ENCODE measurements at regions of chr9 and their contacts with region 1.

Region 1: GRCh38 chr9:34500623-34501267 is 22.0 kb downstream of the ENHO start:
- DNase-seq: peak; percentile 91
- H3K4me3 Mint-ChIP-seq: no peak overlapping the region
- H3K27ac Mint-ChIP-seq: no peak overlapping the region
- H3K4me1 Mint-ChIP-seq: peaks cover 13% of the 10 kb centered on the region
- H3K27me3 Mint-ChIP-seq: peaks cover 7% of the 10 kb centered on the region

Region 2: GRCh38 chr9:34403554-34404380 is 97.0 kb before region 1 on chr9:
- CTCF ChIA-PET with region 1: interaction called, 77 read pairs
- intact Hi-C with region 1: loop called (anchors 1 kb)
- DNase-seq: peak; percentile 79
- H3K4me3 Mint-ChIP-seq: no peak overlapping the region
- H3K27ac Mint-ChIP-seq: no peak overlapping the region
- H3K4me1 Mint-ChIP-seq: no peaks in the 10 kb centered on the region
- H3K27me3 Mint-ChIP-seq: no peaks in the 10 kb centered on the region

Region 3: GRCh38 chr9:34437006-34437925 is 63.5 kb before region 1 on chr9:
- CTCF ChIA-PET with region 1: interaction called, 46 read pairs
- intact Hi-C with region 1: loop called (anchors 1 kb)
- DNase-seq: peak; percentile 78
- H3K4me3 Mint-ChIP-seq: no peak overlapping the region
- H3K27ac Mint-ChIP-seq: peak overlapping the region; percentile 12
- H3K4me1 Mint-ChIP-seq: peaks cover 7% of the 10 kb centered on the region
- H3K27me3 Mint-ChIP-seq: no peaks in the 10 kb centered on the region

Region 4: GRCh38 chr9:34446468-34446891 is 54.3 kb before region 1 on chr9:
- CTCF ChIA-PET with region 1: interaction called, 46 read pairs
- intact Hi-C with region 1: no loop called
- DNase-seq: no peak
- H3K4me3 Mint-ChIP-seq: no peak overlapping the region
- H3K27ac Mint-ChIP-seq: no peak overlapping the region
- H3K4me1 Mint-ChIP-seq: peaks cover under 1% of the 10 kb centered on the region
- H3K27me3 Mint-ChIP-seq: no peaks in the 10 kb centered on the region

Region 5: GRCh38 chr9:34522971-34523797 is 22.4 kb after region 1 on chr9 and contains the start of gene ENHO:
- CTCF ChIA-PET with region 1: interaction called, 4 read pairs
- intact Hi-C with region 1: loop called (anchors 2 kb)
- DNase-seq: peak; percentile 88
- H3K4me3 Mint-ChIP-seq: peak within 1 kb of the TSS; percentile 57
- H3K27ac Mint-ChIP-seq: no peak within 1 kb of the TSS
- H3K4me1 Mint-ChIP-seq: peaks cover 22% of the 10 kb centered on the region
- H3K27me3 Mint-ChIP-seq: peaks cover 11% of the 10 kb centered on the region
- total RNA-seq, gene ENHO: 0.19 to 0.27 TPM

Region 6: DNA sequence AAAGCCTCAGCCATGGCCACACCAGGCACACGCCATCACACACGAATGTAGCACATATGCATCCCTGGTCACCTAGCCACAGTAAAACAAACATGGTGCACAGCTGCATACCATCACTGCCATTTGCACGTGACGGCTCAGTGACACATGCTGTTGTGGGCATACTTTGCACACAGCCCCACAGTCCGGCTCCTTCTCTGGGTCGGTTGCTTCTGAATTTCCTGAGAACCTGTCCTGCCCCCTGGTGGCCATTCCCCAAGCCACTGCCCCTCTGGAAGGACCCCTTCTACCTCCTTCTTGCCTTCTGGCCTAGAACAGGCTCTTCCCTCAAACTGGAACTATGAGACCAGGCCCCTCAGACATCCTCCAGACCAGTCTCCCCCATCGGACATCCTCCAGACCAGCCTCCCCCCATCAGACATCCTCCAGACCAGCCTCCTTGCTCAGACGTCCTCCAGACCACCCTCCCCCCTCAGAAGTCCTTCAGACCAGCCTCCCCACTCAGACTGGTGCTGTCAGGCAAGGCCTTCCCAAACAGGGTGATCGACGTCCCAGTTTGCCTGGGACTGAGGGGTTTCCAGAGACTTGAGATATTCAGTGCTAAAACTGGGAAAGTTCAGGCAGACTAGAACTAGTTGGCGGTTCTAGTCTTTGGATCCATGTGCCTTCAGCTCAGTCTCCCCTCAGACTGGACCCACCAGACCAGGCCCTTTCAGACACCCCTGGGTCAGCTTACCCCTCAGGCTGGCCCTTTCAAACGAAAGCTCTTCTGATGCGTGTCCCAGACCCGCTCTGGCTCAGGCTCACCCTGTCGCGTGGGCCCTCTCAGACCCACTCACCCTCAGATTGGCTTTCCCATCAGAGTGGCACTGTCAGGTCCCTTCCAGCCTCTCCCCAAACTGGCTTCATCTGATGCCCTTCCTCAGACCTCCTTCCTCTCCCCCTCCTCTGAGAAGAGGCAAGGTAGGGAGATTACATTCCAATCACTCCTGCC is 46.4 kb after region 1 on chr9:
- CTCF ChIA-PET with region 1: no interaction called
- intact Hi-C with region 1: loop called (anchors 1 kb)
- DNase-seq: peak; percentile 77
- H3K4me3 Mint-ChIP-seq: no peak overlapping the region
- H3K27ac Mint-ChIP-seq: no peak overlapping the region
- H3K4me1 Mint-ChIP-seq: no peaks in the 10 kb centered on the region
- H3K27me3 Mint-ChIP-seq: peaks cover 10% of the 10 kb centered on the region

Region 7: GRCh38 chr9:34603610-34604231 is 103.0 kb after region 1 on chr9:
- CTCF ChIA-PET with region 1: no interaction called
- intact Hi-C with region 1: loop called (anchors 1 kb)
- DNase-seq: peak; percentile 89
- H3K4me3 Mint-ChIP-seq: no peak overlapping the region
- H3K27ac Mint-ChIP-seq: no peak overlapping the region
- H3K4me1 Mint-ChIP-seq: no peaks in the 10 kb centered on the region
- H3K27me3 Mint-ChIP-seq: no peaks in the 10 kb centered on the region